Tibial artery (tissue), 4 donors: ENCODE measurements at regions of chr16 and their contacts with region 1.

Region 1: DNA sequence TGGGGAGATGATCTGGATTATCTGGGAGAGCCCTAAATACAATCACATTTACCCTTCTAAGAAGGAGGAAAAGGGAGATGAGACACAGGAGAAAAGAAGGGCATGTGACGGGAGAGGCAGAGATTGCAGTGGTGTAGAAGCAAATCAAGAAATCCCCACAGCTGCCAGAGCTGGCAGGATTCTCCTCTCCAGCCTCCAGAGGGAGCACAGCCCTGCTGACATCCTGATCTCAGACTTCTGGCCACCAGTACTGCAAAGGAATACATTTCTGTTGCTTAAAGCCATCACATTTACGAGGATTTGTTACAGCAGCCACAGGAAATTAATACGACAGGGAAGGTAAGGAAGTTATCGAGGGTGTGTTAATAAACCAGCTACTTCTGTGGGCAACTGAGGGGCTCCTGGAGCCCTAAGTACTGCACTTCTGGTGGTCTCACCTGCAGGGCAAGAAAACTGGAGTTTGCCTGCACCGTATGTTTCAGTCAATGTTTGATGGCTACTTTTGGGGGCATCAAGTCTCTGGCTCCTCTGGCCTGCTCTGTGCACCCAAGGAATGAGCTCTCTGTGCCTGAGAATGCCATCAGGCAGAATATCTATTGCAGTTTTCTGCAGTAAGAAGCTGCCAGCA is 22.9 kb upstream of the CDH13 start:
- DNase-seq: peak; percentile 39 to 74
- H3K4me3 ChIP-seq: no peak overlapping the region
- H3K27ac ChIP-seq: no peak overlapping the region
- H3K4me1 ChIP-seq: peaks cover 0 to 5% (median 0%) of the 10 kb centered on the region in 4 donors
- H3K27me3 ChIP-seq: no peaks in the 10 kb centered on the region
- CTCF ChIP-seq: peak; percentile 76 to 77

Region 2: DNA sequence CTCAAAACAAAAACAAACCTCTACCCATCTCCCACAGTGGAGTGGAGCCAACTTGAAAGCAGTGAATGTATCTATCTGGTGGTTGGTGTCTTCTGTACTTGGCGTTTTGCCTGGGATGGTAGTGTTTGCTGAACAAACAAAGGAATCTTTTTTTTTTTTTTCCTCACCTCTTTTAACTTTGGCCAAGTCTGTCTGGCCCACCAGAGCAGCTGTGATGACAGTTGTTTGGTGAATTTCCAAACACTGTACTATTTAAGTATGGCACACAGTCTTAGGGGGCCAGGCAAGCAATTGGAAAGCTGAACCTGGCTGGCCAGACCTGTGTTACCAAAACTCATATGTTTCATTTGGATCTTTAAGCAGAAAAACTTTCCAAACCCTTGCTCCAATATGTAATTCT is 78.9 kb before region 1 on chr16:
- intact Hi-C with region 1: no loop called
- DNase-seq: no peak
- H3K4me3 ChIP-seq: no peak overlapping the region
- H3K27ac ChIP-seq: no peak overlapping the region
- H3K4me1 ChIP-seq: peaks cover 0 to 2% (median 0%) of the 10 kb centered on the region in 4 donors
- H3K27me3 ChIP-seq: no peaks in the 10 kb centered on the region
- CTCF ChIP-seq: no peak

Region 3: GRCh38 chr16:83215406-83216001 is 611.6 kb after region 1 on chr16:
- intact Hi-C with region 1: loop called (anchors 10 kb)
- DNase-seq: no peak
- H3K4me3 ChIP-seq: no peak overlapping the region
- H3K27ac ChIP-seq: no peak overlapping the region
- H3K4me1 ChIP-seq: peaks cover 0 to 20% (median 0%) of the 10 kb centered on the region in 4 donors
- H3K27me3 ChIP-seq: no peaks in the 10 kb centered on the region
- CTCF ChIP-seq: peak in 1 of 2 experiments; percentile 47

Region 4: GRCh38 chr16:83441517-83441916 is 837.6 kb after region 1 on chr16:
- intact Hi-C with region 1: loop called (anchors 10 kb)
- DNase-seq: no peak
- H3K4me3 ChIP-seq: no peak overlapping the region
- H3K27ac ChIP-seq: no peak overlapping the region
- H3K4me1 ChIP-seq: peaks cover 0 to 8% (median 3%) of the 10 kb centered on the region in 4 donors
- H3K27me3 ChIP-seq: no peaks in the 10 kb centered on the region
- CTCF ChIP-seq: peak in 1 of 2 experiments; percentile 16